CD4-positive, alpha-beta T cell (primary cell): ENCODE measurements at regions of chr4 and their contacts with region 1.

Region 1: GRCh38 chr4:79695848-79696247 is 287.8 kb upstream of the GK2 start:
- DNase-seq: no peak
- ATAC-seq: no peak
- H3K4me3 ChIP-seq: no peak overlapping the region
- H3K4me3 Mint-ChIP-seq: no peak overlapping the region
- H3K27ac ChIP-seq: no peak overlapping the region
- H3K27ac Mint-ChIP-seq: no peak overlapping the region
- H3K4me1 ChIP-seq: no peaks in the 10 kb centered on the region
- H3K4me1 Mint-ChIP-seq: no peaks in the 10 kb centered on the region
- H3K27me3 ChIP-seq: no peaks in the 10 kb centered on the region
- H3K27me3 Mint-ChIP-seq: peaks cover 5% of the 10 kb centered on the region
- CTCF ChIP-seq: no peak

Region 2: GRCh38 chr4:79712736-79713135 is 16.9 kb after region 1 on chr4:
- CTCF ChIA-PET with region 1: no interaction called
- POLR2A ChIA-PET with region 1: no interaction called
- intact Hi-C with region 1: loop called in 1 of 2 experiments (anchors 2 kb)
- DNase-seq: no peak
- ATAC-seq: no peak
- H3K4me3 ChIP-seq: no peak overlapping the region
- H3K4me3 Mint-ChIP-seq: no peak overlapping the region
- H3K27ac ChIP-seq: no peak overlapping the region
- H3K27ac Mint-ChIP-seq: no peak overlapping the region
- H3K4me1 ChIP-seq: no peaks in the 10 kb centered on the region
- H3K4me1 Mint-ChIP-seq: no peaks in the 10 kb centered on the region
- H3K27me3 ChIP-seq: no peaks in the 10 kb centered on the region
- H3K27me3 Mint-ChIP-seq: no peaks in the 10 kb centered on the region
- CTCF ChIP-seq: no peak